ENCODE measurements at regions of chr7 and their contacts with region 1.

Region 1: GRCh38 chr7:95871078-95871782 is 98.9 kb downstream of the DYNC1I1 start:
- DNase-seq: no peak
- H3K4me3 ChIP-seq: no peak overlapping the region
- H3K27ac ChIP-seq: peak overlapping the region; percentile 14 to 29
- H3K4me1 ChIP-seq: peaks cover 0 to 18% of the 10 kb centered on the region in 2 donors
- H3K27me3 ChIP-seq: no peaks in the 10 kb centered on the region
- CTCF ChIP-seq: peak; percentile 32 to 72 (median 61)

Region 2: DNA sequence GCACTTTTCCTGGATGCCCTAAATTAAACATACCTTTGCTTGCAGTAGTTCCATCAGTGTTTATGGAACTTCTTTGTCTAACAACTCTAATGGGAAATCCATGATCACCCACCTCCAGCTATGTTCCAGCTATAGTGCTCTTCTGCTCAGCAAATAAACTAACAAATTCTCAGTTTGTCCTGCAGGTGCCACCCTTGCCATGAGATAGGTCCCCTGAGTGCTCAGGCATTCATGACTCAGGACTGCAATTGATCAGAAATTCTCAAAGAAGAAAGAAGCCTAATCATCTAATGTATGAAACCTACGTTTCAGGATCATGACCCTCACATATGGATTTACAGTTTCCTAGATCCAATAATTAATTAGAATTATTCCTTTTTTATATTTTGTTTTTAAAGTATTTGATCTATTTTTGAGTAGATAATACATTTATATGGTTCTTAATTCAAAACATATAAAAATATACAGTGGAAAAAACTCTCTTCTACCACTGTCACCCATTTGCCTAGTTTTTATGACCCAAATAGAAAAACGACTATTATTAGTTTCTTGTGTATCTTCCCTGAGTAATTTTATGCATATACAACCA is 147.5 kb before region 1 on chr7:
- intact Hi-C with region 1: loop called (anchors 1 kb)
- DNase-seq: no peak
- H3K4me3 ChIP-seq: no peak overlapping the region
- H3K27ac ChIP-seq: no peak overlapping the region
- H3K4me1 ChIP-seq: no peaks in the 10 kb centered on the region
- H3K27me3 ChIP-seq: no peaks in the 10 kb centered on the region
- CTCF ChIP-seq: peak; percentile 47 to 67 (median 47)

Region 3: GRCh38 chr7:95772298-95772770 is 98.9 kb before region 1 on chr7 and contains the start of gene DYNC1I1:
- intact Hi-C with region 1: loop called (anchors 5 kb)
- DNase-seq: peak; percentile 13 to 79
- H3K4me3 ChIP-seq: peak within 1 kb of the TSS; percentile 66 to 96
- H3K27ac ChIP-seq: peak within 1 kb of the TSS; percentile 47 to 72
- H3K4me1 ChIP-seq: peaks cover 0 to 3% of the 10 kb centered on the region in 2 donors
- H3K27me3 ChIP-seq: no peaks in the 10 kb centered on the region
- CTCF ChIP-seq: no peak
- total RNA-seq, gene DYNC1I1: 13.2 TPM

Region 4: GRCh38 chr7:96084881-96085551 is 213.8 kb after region 1 on chr7:
- intact Hi-C with region 1: no loop called
- DNase-seq: no peak
- H3K4me3 ChIP-seq: no peak overlapping the region
- H3K27ac ChIP-seq: no peak overlapping the region
- H3K4me1 ChIP-seq: peaks cover 0 to 2% of the 10 kb centered on the region in 2 donors
- H3K27me3 ChIP-seq: no peaks in the 10 kb centered on the region
- CTCF ChIP-seq: no peak